Lower leg skin (tissue), 4 donors: ENCODE measurements at regions of chr14 and their contacts with region 1.

Region 1: DNA sequence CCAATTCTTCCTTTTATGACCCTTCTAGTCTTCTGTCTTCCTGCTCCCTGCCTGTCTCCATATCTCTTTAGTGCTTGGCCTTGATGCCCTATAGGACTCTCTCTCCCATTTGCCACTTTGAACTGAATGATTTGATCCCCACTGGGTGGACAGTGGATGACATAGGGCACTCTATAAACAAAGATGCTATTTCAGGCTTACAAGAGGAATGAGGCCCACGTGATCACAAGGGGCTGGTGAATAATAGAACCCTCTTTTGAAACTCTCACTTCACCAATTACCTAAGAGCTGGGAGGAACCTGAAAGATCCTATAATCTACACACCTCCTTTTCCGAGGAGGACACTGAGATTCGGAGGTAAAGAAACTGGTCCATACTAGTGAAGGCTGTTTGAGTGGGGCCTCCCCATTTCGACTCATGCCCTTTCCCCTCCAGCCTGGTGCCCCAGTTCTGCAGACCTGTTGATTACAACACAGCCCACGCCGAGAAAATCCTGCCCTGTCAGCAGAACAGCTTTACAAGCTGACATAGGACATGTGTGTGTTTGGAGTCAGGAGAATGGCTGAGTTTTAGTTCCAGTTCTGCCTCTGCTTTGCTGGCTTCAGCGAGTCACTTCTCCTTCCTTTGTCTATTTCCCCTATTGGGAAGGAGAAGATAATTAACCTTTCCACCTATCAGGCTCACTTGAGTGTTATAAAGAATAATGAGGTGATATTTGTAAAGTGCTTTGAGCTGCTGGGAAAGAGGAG is 400.3 kb downstream of the ZFP36L1 start:
- DNase-seq: peak; percentile 68 to 89
- H3K4me3 ChIP-seq: no peak overlapping the region
- CTCF ChIP-seq: no peak
- POLR2A ChIP-seq: no peak

Region 2: GRCh38 chr14:68466491-68467032 is 74.0 kb after region 1 on chr14:
- intact Hi-C with region 1: loop called (anchors 10 kb)
- DNase-seq: no peak
- H3K4me3 ChIP-seq: no peak overlapping the region
- CTCF ChIP-seq: no peak
- POLR2A ChIP-seq: no peak

Region 3: GRCh38 chr14:68520637-68521556 is 128.3 kb after region 1 on chr14:
- intact Hi-C with region 1: no loop called
- DNase-seq: peak in 1 of 2 donors; percentile 85
- H3K4me3 ChIP-seq: no peak overlapping the region
- CTCF ChIP-seq: no peak
- POLR2A ChIP-seq: no peak